Lower leg skin (tissue), 4 donors: ENCODE measurements at regions of chr6 and their contacts with region 1.

Region 1: GRCh38 chr6:32529697-32530429 is at the start of gene HLA-DRB5:
- DNase-seq: peak; percentile 12 to 70
- H3K4me3 ChIP-seq: no peak within 1 kb of the TSS
- CTCF ChIP-seq: no peak
- POLR2A ChIP-seq: no peak
- total RNA-seq, gene HLA-DRB5: 0.25 to 23.9 (median 2.7) TPM

Region 2: GRCh38 chr6:32568561-32568960 is 38.7 kb after region 1 on chr6:
- intact Hi-C with region 1: no loop called
- DNase-seq: no peak
- H3K4me3 ChIP-seq: no peak overlapping the region
- CTCF ChIP-seq: no peak
- POLR2A ChIP-seq: no peak

Region 3: GRCh38 chr6:32589598-32590449 is 60.0 kb after region 1 on chr6 and contains the start of gene HLA-DRB1:
- intact Hi-C with region 1: loop called (anchors 10 kb)
- DNase-seq: no peak
- H3K4me3 ChIP-seq: no peak within 1 kb of the TSS
- CTCF ChIP-seq: no peak
- POLR2A ChIP-seq: no peak
- total RNA-seq, gene HLA-DRB1: 37.6 to 65.7 (median 58.6) TPM